ENCODE measurements at regions of chr5 and their contacts with region 1.

Region 1: DNA sequence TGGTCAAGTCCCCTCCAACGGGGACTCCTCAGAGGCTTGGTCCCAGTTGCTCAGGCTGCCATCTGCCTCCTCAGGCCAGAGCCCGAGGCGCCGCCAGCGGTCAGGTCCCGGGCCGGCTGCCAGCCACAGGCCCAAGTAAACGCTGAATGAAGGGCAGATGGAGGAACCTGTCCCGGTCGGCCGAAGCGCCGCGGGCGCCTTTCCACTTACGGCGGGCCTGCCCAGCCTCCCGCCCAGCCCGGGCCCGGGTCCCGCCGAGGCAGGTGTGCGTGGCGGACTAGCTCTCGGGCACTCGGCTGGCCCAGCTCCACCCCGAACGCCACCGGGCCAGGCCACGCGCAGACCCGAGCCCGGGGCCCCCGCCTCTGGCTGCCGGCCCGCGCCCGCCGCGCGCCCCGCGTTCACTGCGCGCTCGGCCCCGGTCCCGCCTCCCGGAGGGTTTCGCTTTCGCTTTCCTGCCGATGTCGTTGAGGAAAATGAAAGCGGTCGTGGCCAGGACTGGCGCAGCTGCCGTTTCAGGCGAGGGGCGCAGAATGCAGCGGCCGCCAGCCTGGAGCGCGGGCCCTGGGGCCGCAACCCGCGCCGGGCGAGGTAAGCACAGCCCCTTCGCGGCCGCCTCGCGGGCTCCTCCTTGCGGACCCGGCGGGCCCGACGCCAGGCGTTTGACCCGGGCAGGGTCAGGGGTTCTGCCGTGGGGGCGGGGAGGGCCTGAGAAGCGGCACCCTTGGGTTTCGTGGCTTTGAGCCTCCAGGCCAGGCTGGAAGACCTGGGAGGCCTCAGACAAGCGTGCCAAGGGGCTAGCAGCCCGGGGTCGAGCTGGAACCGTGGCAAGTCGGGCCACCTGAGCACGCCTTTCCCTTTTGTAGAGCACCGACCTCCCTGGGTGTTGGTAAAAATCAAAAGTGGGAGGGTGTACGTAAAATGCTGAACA is 41.2 kb downstream of the SLC22A5 start:
- DNase-seq: peak; percentile 93
- ATAC-seq: peak; percentile 80

Region 2: GRCh38 chr5:132215329-132215728 is 195.4 kb before region 1 on chr5:
- intact Hi-C with region 1: no loop called
- DNase-seq: peak; percentile 97
- ATAC-seq: peak; percentile 89

Region 3: GRCh38 chr5:132342291-132343180 is 68.2 kb before region 1 on chr5:
- intact Hi-C with region 1: no loop called
- DNase-seq: no peak
- ATAC-seq: peak; percentile 71

Region 4: DNA sequence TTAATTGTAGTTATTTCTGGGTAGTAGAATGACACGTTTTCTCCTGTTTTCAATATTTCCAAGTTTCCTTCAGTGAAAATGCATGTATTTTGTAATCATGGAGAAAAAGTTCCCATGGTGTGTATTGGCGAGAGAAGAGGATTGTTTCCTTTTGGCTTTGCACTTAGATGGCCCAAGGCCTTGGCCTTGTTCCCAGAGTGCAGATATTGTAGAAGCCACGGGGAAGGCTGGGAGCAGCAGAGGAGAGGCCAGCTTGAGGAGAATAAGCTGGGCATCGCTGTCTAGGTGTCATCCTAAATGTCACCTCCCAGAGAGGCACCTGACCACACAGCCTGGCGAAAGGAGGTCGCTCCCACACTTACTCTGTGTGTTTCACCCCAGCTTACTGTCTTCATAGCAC is 36.0 kb after region 1 on chr5:
- intact Hi-C with region 1: no loop called
- DNase-seq: peak; percentile 86
- ATAC-seq: peak; percentile 91

Region 5: GRCh38 chr5:132490486-132491367 is 80.0 kb after region 1 on chr5 and contains the start of gene IRF1:
- intact Hi-C with region 1: loop called (anchors 10 kb)
- DNase-seq: peak; percentile 98
- ATAC-seq: peak; percentile 90
- total RNA-seq, gene IRF1: 12.6 TPM